ENCODE measurements at regions of chr19 and their contacts with region 1.

Region 1: DNA sequence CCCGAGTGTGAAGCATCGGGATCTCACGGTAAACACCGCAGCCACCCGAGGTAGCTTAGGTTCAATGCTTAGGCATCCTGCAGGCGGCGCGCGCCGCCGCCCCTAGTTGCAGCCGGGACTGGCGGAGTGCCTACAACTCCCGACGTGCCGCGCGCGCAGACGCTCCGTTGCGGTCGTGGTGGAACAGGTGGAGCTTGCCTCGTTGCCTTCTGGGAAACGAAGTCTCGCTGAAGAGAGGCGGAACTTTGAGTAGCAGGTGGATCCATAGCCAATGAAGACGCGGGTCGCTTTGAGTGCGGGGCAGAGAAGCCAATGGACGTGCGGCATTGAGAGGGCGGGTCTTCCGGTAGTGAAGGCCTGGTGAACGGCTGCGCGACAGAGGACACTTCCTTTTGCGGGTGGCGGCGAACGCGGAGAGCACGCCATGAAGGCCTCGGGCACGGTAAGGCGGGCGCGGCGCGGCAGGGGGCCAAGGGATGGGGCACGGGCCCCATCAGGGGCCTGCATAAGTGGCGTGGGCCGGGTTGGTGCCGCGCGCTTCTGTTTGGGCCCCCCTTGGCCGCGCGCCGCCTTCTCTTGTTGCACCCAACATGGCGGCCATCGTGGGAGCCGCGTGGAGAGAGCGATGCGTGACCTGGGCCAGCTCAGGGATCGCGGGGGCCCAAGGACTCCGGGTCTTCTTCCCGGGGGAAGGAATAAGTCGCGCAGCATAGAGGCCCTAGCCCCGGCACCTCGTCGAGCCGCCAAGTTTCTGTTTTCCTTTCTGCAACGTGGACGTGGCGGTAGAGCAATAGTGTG is at the start of gene RPL18A:
- DNase-seq: peak; percentile 98 to 100 (median 100)
- ATAC-seq: peak; percentile 96
- H3K4me3 ChIP-seq: peak within 1 kb of the TSS; percentile 98 to 100
- H3K27ac ChIP-seq: peak within 1 kb of the TSS; percentile 71 to 86
- H3K4me1 ChIP-seq: peaks cover 11 to 50% of the 10 kb centered on the region in 2 donors
- H3K27me3 ChIP-seq: no peaks in the 10 kb centered on the region
- CTCF ChIP-seq: peak; percentile 51 to 74
- polyA plus RNA-seq, gene RPL18A: 1,124 to 1,497 (median 1,287) TPM

Region 2: DNA sequence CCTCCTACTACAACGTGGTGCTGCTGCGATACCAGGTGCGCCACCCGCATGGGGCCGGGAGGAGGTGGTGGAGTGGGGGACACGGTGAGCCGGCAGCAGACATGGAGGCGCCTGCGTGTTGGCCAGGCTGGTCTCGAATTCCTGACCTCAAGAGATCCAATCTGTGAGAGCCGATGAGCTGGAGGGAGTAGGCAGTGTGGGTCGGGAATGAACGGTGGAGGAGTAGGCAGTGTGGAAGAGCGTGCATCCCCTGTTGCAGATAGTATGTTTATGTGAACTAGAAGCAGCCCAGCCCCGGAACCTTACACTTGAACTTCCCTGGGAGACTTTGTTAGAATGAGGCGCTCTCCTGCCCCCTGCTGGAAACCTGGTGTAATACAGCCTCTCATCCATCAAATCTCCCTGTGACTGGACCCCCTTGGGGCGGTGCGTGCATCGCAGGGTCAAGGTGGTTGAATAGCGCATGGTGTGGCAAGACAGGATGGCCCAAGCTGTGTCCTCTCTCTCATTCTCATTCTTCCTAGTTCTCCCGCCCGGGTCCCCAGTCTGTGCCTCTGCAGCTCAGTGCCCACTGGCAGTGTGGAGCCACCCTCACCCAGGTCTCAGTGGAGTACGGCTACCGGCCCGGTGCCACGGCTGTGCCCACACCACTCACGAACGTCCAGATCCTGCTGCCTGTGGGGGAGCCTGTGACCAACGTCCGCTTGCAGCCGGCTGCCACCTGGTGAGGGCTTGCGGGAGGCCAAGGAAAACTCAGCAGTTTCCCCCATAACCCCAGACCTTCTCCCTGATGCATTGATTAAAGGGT is 75.3 kb before region 1 on chr19:
- intact Hi-C with region 1: loop called in 1 of 2 experiments (anchors 10 kb)
- DNase-seq: peak in 3 of 4 donors; percentile 31 to 65 (median 63)
- ATAC-seq: peak; percentile 90
- H3K4me3 ChIP-seq: no peak overlapping the region
- H3K27ac ChIP-seq: no peak overlapping the region
- H3K4me1 ChIP-seq: peaks cover 0 to 7% of the 10 kb centered on the region in 2 donors
- H3K27me3 ChIP-seq: peaks cover 0 to 22% of the 10 kb centered on the region in 2 donors
- CTCF ChIP-seq: peak; percentile 75 to 77

Region 3: GRCh38 chr19:17929056-17929455 is 69.3 kb after region 1 on chr19:
- intact Hi-C with region 1: loop called in 1 of 2 experiments (anchors 10 kb)
- DNase-seq: no peak
- ATAC-seq: no peak
- H3K4me3 ChIP-seq: no peak overlapping the region
- H3K27ac ChIP-seq: no peak overlapping the region
- H3K4me1 ChIP-seq: peaks cover 12 to 19% of the 10 kb centered on the region in 2 donors
- H3K27me3 ChIP-seq: no peaks in the 10 kb centered on the region
- CTCF ChIP-seq: no peak

Region 4: DNA sequence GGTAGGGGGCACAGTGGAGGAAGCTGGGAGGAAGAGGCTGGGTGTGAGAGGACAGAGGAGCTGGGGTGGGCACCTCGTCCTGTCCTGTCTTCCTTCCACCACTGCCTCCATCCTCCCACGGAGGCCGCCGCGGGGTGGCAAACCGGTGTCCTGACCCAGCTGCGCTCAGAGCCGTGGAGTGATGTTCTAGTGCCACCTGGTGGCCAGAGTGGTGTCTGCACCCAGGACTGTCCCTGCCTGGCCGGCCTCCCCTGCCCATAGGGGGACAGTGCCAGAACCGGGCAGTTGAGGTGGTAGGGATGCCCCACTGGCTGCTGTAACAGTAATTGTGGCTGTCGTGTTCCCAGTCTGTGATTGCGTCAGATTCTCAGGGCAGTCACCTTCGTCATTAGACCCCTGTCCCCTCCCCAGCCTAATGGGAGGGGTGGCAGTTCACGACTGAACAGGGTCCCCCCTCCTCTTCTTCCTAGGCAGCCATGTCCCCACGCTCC is 137.1 kb after region 1 on chr19:
- intact Hi-C with region 1: loop called in 1 of 2 experiments (anchors 10 kb)
- DNase-seq: peak; percentile 73 to 97 (median 86)
- ATAC-seq: peak; percentile 81
- H3K4me3 ChIP-seq: no peak overlapping the region
- H3K27ac ChIP-seq: no peak overlapping the region
- H3K4me1 ChIP-seq: peaks cover 0 to 34% of the 10 kb centered on the region in 2 donors
- H3K27me3 ChIP-seq: peaks cover 0 to 33% of the 10 kb centered on the region in 2 donors
- CTCF ChIP-seq: peak; percentile 93 to 100

Region 5: GRCh38 chr19:18274781-18275356 is 415.1 kb after region 1 on chr19:
- intact Hi-C with region 1: no loop called
- DNase-seq: peak in 3 of 4 donors; percentile 83 to 93 (median 91)
- ATAC-seq: peak; percentile 64
- H3K4me3 ChIP-seq: no peak overlapping the region
- H3K27ac ChIP-seq: peak overlapping the region; percentile 47 to 58
- H3K4me1 ChIP-seq: peaks cover 29 to 51% of the 10 kb centered on the region in 2 donors
- H3K27me3 ChIP-seq: no peaks in the 10 kb centered on the region
- CTCF ChIP-seq: no peak

Measured in left lung (tissue), 14 donors.